ENCODE measurements at regions of chr16 and their contacts with region 1.

Region 1: GRCh38 chr16:81723098-81723723 is 55.9 kb upstream of the PLCG2 start:
- DNase-seq: peak in 2 of 6 donors; percentile 32 to 45
- ATAC-seq: peak; percentile 88 to 98 (median 96)
- H3K4me3 ChIP-seq: no peak overlapping the region
- H3K27ac ChIP-seq: no peak overlapping the region
- H3K4me1 ChIP-seq: no peaks in the 10 kb centered on the region
- H3K27me3 ChIP-seq: no peaks in the 10 kb centered on the region
- CTCF ChIP-seq: peak; percentile 29 to 62 (median 48)

Region 2: DNA sequence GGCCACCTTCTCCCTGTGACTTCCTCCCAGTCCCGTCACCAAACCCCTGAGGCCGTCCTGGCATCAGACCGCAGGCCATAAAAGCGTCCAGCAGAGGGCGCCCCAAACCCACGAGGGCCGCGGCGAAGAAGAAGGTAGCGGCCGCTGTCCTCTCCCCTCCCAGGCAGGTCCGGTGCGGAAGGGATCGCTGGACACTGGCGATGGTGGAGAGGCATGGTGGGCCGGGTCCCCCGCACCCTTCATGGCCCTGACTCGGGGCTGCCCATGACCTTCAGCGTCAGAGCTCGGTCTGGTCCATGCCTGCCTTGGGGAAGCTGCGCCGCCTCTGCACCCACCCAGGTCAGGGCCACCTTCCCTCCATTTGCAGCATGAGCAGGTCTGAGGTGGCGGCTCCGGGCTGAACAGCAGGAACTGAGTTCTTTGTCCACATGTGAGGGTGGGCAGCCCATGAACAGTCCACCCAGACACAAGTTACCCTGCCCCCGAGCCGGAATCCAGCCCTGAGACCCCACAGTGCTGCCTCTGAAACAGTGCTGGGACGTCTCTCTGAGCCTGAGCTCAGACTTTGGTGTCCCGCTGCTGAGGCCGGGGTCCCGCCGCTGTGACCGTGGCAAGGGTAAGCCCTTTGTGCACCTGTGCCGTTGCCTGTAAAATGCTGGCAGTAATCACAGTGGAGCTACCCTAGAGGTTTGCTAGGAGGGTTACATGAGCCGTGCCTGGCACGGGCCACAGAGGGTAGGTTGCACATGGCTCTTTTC is 319.4 kb before region 1 on chr16:
- intact Hi-C with region 1: loop called in 1 of 3 experiments (anchors 5 kb)
- DNase-seq: peak; percentile 67 to 98 (median 87)
- ATAC-seq: peak; percentile 94 to 97 (median 96)
- H3K4me3 ChIP-seq: peak overlapping the region in 1 of 4 donors; percentile 26
- H3K27ac ChIP-seq: no peak overlapping the region
- H3K4me1 ChIP-seq: peaks cover 0 to 3% (median 0%) of the 10 kb centered on the region in 3 donors
- H3K27me3 ChIP-seq: no peaks in the 10 kb centered on the region
- CTCF ChIP-seq: peak; percentile 92 to 97 (median 96)

Region 3: DNA sequence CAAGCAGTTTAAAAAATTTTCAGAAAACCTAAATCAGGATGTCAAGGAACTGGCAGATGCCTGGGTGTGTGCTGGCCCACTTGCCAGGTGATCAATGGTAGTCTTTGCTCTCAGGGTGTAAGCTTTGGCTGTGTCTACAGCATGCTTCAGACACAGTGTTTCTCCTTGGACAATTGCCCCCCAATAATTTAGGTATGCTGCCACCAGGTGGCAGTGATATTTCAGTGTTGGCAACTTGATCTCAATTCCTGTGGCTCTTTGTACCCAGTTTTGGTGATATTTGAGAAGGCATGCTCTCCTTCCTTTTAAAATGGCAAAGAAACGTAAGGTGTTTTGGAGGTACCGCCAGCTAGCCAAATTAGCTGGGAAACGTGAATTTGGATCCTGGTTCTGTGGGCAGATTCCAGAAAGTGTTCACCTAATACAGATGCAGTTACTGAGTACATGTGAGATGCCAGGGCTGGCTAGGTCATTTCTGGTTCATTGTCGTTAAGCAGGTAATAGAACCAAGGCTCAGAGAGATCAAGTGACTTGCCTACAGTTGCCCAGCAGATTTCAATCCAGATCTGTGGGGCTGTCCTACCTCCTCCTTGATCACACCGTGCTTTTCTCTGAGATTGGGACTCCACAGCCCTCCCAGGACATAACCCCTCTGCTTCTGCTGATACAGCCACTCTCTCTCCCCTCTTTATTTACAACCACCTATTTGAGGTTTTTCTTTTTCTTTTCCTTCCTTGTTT is 99.7 kb before region 1 on chr16:
- intact Hi-C with region 1: loop called in 1 of 3 experiments (anchors 5 kb)
- DNase-seq: peak in 2 of 6 donors; percentile 33 to 46
- ATAC-seq: no peak
- H3K4me3 ChIP-seq: no peak overlapping the region
- H3K27ac ChIP-seq: no peak overlapping the region
- H3K4me1 ChIP-seq: peaks cover 7 to 18% (median 15%) of the 10 kb centered on the region in 3 donors
- H3K27me3 ChIP-seq: no peaks in the 10 kb centered on the region
- CTCF ChIP-seq: peak in 3 of 4 donors; percentile 19 to 30 (median 29)